ENCODE measurements at regions of chr7 and their contacts with region 1.

Region 1: DNA sequence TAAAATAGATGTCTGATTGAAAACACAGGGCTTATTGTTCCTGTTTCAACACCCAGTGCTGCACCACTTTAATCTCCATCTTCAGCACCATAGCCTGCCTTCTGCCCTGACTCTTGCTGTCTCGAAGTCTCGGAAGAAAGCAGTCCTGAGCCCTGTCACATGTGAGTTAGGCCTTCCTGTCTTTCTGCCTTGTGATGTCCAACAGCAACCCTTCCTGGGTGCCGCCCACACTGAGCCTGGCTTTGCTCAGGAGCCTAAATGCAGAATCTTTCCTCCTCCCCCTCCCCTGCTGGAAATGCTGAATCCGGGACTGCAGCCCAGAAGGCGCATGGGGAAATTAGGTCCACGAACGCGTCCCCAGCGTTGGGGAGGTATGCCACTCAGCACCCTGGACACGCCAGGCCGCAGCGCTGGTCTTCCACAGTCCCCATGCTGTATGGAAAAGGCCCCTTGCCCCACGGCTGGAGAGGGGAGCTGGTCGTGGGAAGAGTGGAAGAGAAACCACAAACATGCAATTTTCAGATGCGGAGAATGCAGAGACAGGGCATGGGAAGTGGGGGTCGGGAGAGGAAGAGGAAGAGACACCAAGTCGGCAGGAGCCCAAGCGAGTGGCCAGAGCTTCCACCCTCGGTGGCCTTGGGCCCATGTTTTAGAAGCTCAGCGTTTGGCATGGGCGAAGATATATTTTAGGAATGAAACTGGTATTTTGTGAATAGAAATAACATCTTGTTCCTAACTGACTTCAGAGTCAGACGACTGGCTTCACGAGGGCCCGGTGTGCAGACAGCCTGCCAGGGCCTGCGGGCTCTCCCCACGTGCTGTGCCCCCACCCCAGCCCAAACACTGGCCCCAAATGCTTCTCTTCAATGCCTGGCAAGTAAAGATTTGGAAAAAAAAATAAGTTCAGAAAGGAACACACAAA is 656.1 kb upstream of the FOXK1 start:
- DNase-seq: no peak
- ATAC-seq: no peak
- H3K4me3 ChIP-seq: no peak overlapping the region
- H3K27ac ChIP-seq: no peak overlapping the region
- H3K4me1 ChIP-seq: no peaks in the 10 kb centered on the region
- H3K27me3 ChIP-seq: no peaks in the 10 kb centered on the region
- CTCF ChIP-seq: no peak

Region 2: GRCh38 chr7:3880228-3880987 is 145.5 kb before region 1 on chr7:
- CTCF ChIA-PET with region 1: no interaction called
- POLR2A ChIA-PET with region 1: no interaction called
- in situ Hi-C with region 1: no loop called
- intact Hi-C with region 1: no loop called
- DNase-seq: no peak
- ATAC-seq: no peak
- H3K4me3 ChIP-seq: no peak overlapping the region
- H3K27ac ChIP-seq: no peak overlapping the region
- H3K4me1 ChIP-seq: no peaks in the 10 kb centered on the region
- H3K27me3 ChIP-seq: no peaks in the 10 kb centered on the region
- CTCF ChIP-seq: no peak

Region 3: GRCh38 chr7:4042402-4043045 is 16.6 kb after region 1 on chr7:
- CTCF ChIA-PET with region 1: no interaction called
- POLR2A ChIA-PET with region 1: interaction called, 12 read pairs
- in situ Hi-C with region 1: no loop called
- intact Hi-C with region 1: no loop called
- DNase-seq: no peak
- ATAC-seq: no peak
- H3K4me3 ChIP-seq: no peak overlapping the region
- H3K27ac ChIP-seq: no peak overlapping the region
- H3K4me1 ChIP-seq: no peaks in the 10 kb centered on the region
- H3K27me3 ChIP-seq: no peaks in the 10 kb centered on the region
- CTCF ChIP-seq: no peak

Region 4: GRCh38 chr7:4056552-4057288 is 30.8 kb after region 1 on chr7:
- CTCF ChIA-PET with region 1: no interaction called
- POLR2A ChIA-PET with region 1: no interaction called
- in situ Hi-C with region 1: no loop called
- intact Hi-C with region 1: no loop called
- DNase-seq: no peak
- ATAC-seq: no peak
- H3K4me3 ChIP-seq: no peak overlapping the region
- H3K27ac ChIP-seq: no peak overlapping the region
- H3K4me1 ChIP-seq: no peaks in the 10 kb centered on the region
- H3K27me3 ChIP-seq: no peaks in the 10 kb centered on the region
- CTCF ChIP-seq: no peak

Measured in Panc1 (cell line).